Activated naive CD4-positive, alpha-beta T cell treated with anti-CD3 and anti-CD28 coated beads for 36 hours (primary cell): ENCODE measurements at regions of chr2 and their contacts with region 1.

Region 1: DNA sequence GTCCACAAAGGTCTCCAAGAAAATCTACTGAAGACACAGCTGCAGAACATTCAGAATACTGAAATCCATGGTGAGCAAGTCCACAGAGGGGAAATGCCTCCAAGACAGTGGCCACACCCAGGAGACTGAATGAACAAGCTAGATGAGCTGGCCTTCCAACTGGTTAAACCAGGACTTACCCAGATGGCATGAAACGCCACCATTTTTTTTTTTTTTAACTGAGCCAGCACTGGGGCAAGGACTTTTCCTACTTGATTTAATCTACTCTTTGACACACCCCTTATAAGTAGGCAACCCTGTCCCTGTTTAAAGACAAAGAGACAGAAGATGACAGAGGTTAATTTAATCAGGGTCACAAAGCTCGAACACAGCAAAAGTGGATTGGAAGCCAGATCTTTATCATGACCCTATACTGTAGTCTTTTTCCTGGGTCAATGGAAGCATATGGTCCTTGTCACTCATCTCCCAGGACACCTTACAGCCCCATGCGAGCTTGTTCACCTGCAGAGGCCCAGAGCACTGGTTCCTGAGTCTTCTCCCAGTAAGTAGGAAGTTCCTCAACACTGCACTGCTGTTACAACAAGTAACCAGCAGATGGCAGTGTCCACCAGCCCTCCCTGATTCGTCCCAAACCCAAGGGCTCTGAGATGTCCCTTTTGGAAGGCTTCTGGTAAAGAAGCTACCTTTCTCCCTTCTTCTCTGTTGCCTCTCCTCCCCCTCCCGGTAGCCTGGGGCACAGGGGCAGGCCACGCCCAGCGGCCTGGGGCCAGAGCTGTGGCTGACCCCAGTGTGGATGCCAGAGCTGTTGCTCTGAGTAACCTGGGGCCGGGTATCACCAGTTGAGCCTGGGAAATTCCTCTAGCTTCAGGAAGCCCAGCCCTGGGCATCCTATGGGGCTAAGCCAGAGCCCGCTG is 5.6 kb upstream of the GDF7 start:
- DNase-seq: peak; percentile 77
- H3K4me3 Mint-ChIP-seq: no peak overlapping the region
- H3K27ac Mint-ChIP-seq: no peak overlapping the region
- H3K4me1 Mint-ChIP-seq: peaks cover 7% of the 10 kb centered on the region
- H3K27me3 Mint-ChIP-seq: peaks cover 44% of the 10 kb centered on the region

Region 2: DNA sequence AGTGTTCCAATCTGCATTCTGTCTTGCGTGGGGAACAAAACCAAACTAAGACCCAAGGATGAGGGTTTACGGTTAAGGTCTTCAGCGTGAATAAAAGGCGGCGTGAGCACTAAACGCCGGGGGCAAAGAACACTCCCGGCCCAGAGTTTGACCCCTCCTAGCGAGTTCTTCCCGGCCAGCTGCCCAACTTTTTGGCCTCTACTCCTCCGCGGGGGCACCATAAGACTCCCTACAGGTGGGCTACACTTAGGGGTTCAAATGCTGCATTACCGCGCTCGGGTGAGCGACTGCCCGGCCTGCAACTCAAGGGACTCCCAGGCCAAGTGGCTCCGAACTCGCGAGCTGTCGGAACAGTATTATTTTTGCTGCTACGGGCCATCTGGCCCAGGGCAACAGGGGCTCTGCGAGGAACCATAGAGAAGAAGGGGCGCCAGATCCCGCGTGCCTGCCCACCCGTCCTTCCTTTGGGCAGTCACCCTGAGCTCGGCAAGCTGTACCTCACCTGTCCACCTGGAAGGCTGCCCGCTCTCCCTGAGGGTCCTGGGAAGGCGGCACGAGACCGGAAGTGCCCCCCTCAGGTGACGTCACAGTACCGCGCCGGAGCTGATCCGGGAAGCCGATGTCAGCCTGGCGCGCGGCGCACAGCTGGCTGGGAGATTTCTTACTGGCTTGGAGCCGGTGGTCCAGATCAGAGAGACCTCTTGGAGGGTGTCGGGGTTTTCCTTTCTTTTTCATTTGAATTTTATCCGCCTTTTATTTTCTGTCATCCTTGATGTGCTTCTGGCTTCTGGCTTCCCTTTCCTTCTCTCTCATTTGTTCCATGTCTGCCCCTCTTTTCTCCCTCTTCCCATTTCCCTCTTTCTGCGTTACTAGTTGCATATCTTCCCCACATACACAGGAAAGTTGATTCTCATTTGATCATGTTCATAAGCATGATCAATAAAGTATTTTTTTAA is 161.5 kb after region 1 on chr2 and contains the start of gene LDAH:
- CTCF ChIA-PET with region 1: interaction called, 10 read pairs
- intact Hi-C with region 1: loop called (anchors 2 kb)
- DNase-seq: peak; percentile 92
- H3K4me3 Mint-ChIP-seq: peak within 1 kb of the TSS; percentile 96
- H3K27ac Mint-ChIP-seq: peak within 1 kb of the TSS; percentile 97
- H3K4me1 Mint-ChIP-seq: peaks cover 26% of the 10 kb centered on the region
- H3K27me3 Mint-ChIP-seq: no peaks in the 10 kb centered on the region
- total RNA-seq, gene LDAH: 31.1 to 37.6 TPM

Region 3: GRCh38 chr2:20953145-20953824 is 292.0 kb after region 1 on chr2:
- CTCF ChIA-PET with region 1: interaction called, 174 read pairs
- intact Hi-C with region 1: no loop called
- DNase-seq: no peak
- H3K4me3 Mint-ChIP-seq: no peak overlapping the region
- H3K27ac Mint-ChIP-seq: no peak overlapping the region
- H3K4me1 Mint-ChIP-seq: no peaks in the 10 kb centered on the region
- H3K27me3 Mint-ChIP-seq: peaks cover 3% of the 10 kb centered on the region

Region 4: DNA sequence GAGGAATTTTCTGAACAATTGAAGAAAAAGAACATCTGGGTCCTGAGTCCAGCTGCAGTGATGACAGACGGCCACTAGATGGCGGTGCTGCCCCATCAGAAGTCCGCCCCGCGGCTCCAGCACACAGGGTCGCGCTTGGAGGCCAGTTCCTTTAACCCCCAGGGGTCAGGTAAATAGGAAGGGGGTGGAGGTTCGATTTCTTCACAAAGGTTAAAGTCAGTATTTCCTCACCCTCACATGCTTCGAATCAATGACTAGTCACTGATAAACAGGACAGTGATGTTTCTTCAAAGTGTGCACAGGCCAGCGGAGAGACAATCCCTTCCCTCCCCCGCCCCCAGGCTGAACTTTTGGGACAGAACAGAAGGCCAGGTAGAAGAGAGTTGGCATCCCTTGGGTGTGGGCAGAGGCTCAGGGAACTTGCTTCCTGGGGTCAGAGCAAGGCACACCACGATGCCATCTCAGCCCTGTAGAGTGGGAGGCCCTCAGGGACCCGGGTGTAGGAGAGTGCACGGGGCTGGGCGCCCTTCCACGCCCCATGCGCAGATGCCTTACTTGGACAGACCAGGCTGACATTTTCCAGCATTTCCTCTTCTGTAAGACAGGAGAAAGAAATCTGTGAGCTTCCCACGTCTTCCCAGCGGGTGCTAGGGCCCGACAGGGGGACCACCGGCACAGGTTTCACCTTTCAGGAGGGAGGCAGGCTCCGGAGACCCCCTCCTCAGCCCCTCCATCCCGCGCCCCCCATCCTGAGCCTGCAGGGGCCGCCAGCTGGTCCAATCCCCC is 381.8 kb after region 1 on chr2:
- CTCF ChIA-PET with region 1: no interaction called
- intact Hi-C with region 1: loop called (anchors 10 kb)
- DNase-seq: peak; percentile 67
- H3K4me3 Mint-ChIP-seq: no peak overlapping the region
- H3K27ac Mint-ChIP-seq: no peak overlapping the region
- H3K4me1 Mint-ChIP-seq: peaks cover 4% of the 10 kb centered on the region
- H3K27me3 Mint-ChIP-seq: peaks cover 21% of the 10 kb centered on the region

Region 5: GRCh38 chr2:21317131-21317530 is 655.8 kb after region 1 on chr2:
- CTCF ChIA-PET with region 1: no interaction called
- intact Hi-C with region 1: loop called (anchors 5 kb)
- DNase-seq: peak; percentile 43
- H3K4me3 Mint-ChIP-seq: no peak overlapping the region
- H3K27ac Mint-ChIP-seq: no peak overlapping the region
- H3K4me1 Mint-ChIP-seq: no peaks in the 10 kb centered on the region
- H3K27me3 Mint-ChIP-seq: no peaks in the 10 kb centered on the region